ENCODE measurements at regions of chr13 and their contacts with region 1.

Region 1: DNA sequence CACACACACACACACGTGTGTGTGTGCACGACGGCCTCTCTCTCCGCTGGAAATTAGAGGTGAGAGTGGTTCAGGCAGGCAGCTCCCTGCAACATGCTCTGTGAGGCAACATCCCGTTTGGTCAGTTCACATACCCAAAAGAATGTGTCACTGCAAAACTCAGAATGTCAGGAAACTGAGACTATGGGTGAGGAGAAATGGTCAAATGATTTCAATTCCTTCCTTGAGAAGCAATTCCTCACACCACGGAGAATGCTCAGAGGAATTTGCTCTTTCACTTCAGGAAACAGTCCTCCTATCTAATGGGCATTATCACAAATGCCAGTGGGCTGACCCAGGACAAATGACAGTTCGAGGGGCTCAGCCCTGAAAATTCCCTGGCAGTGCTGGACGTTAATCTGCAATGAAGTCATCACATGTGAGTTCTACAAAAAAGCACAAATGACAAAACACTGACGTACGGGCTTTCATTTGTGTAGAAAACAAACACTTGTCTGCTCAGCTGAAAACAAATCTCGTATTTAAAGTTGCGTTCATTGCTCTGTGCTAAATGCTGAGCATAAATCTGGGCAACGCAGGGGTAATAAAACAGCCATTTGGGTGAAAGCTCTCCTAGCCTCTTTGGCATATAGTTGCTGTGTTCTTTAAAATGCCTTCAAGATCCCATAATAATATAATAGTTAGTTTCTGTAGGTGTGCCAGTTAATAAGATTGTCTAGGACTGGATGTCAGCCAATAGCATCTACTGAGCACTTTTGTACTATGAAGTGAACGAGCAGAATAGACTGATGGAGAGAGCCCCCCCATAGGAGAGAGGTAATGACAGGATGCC is 18.6 kb upstream of the LATS2 start:
- DNase-seq: peak; percentile 42 to 94
- H3K4me3 ChIP-seq: peak overlapping the region; percentile 42; the same call in 1 of the 2 replicates
- H3K27ac ChIP-seq: peak overlapping the region; percentile 64
- H3K4me1 ChIP-seq: peaks cover 21% of the 10 kb centered on the region
- H3K27me3 ChIP-seq: no peaks in the 10 kb centered on the region
- CTCF ChIP-seq: no peak

Region 2: GRCh38 chr13:21069561-21070004 is 10.4 kb before region 1 on chr13:
- CTCF ChIA-PET with region 1: no interaction called
- POLR2A ChIA-PET with region 1: no interaction called
- intact Hi-C with region 1: loop called (anchors 1 kb)
- DNase-seq: peak in 1 of 2 experiments; percentile 95
- H3K4me3 ChIP-seq: peak overlapping the region; percentile 11; the same call in 1 of the 2 replicates
- H3K27ac ChIP-seq: peak overlapping the region; percentile 43
- H3K4me1 ChIP-seq: peaks cover 33% of the 10 kb centered on the region
- H3K27me3 ChIP-seq: no peaks in the 10 kb centered on the region
- CTCF ChIP-seq: no peak

Measured in PC-9 (cell line).